ENCODE measurements at regions of chr10 and their contacts with region 1.

Region 1: DNA sequence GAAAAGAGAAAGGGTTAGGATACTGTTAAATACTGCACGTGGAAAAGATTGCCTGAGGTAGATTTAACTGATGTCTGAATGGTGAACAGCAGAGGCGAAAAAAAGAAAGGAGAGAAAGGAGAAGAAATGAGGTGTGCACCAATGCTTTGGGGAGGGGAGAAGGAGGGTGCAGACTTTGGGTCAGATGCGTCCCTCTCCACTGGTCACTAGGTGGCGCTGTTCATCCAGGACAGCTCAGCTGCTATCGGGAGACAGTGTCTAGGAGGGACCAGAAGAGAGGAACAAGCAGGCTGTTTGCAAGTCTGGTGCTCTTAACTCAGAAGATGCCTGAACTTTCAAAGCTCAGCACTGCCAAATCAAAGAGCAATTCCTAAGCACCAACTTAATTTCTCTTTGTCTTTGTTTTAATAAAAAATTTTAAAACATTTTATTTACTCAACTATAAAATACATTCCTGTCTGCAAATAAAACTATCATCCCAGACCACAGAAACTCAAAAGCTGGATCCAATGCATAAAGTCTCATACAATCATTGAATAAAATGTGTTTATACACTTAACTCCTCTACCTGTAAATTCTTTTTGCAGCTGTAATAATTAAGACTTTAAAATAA is 83.9 kb upstream of the PDLIM1 start:
- DNase-seq: peak; percentile 53 to 88
- H3K4me3 ChIP-seq: no peak overlapping the region
- H3K27ac ChIP-seq: peak overlapping the region; percentile 77 to 91
- H3K4me1 ChIP-seq: peaks cover 0 to 69% (median 41%) of the 10 kb centered on the region in 4 donors
- H3K27me3 ChIP-seq: no peaks in the 10 kb centered on the region
- CTCF ChIP-seq: peak; percentile 88 to 94

Region 2: GRCh38 chr10:93741358-93741757 is 1633.3 kb before region 1 on chr10:
- intact Hi-C with region 1: no loop called
- DNase-seq: no peak
- H3K4me3 ChIP-seq: no peak overlapping the region
- H3K27ac ChIP-seq: no peak overlapping the region
- H3K4me1 ChIP-seq: peaks cover 0 to 3% (median 0%) of the 10 kb centered on the region in 4 donors
- H3K27me3 ChIP-seq: no peaks in the 10 kb centered on the region
- CTCF ChIP-seq: no peak

Region 3: GRCh38 chr10:95273393-95274312 is 101.0 kb before region 1 on chr10:
- intact Hi-C with region 1: no loop called
- DNase-seq: peak; percentile 79 to 83
- H3K4me3 ChIP-seq: peak overlapping the region; percentile 22 to 28
- H3K27ac ChIP-seq: peak overlapping the region; percentile 75 to 81
- H3K4me1 ChIP-seq: peaks cover 0 to 72% (median 57%) of the 10 kb centered on the region in 4 donors
- H3K27me3 ChIP-seq: no peaks in the 10 kb centered on the region
- CTCF ChIP-seq: no peak

Region 4: DNA sequence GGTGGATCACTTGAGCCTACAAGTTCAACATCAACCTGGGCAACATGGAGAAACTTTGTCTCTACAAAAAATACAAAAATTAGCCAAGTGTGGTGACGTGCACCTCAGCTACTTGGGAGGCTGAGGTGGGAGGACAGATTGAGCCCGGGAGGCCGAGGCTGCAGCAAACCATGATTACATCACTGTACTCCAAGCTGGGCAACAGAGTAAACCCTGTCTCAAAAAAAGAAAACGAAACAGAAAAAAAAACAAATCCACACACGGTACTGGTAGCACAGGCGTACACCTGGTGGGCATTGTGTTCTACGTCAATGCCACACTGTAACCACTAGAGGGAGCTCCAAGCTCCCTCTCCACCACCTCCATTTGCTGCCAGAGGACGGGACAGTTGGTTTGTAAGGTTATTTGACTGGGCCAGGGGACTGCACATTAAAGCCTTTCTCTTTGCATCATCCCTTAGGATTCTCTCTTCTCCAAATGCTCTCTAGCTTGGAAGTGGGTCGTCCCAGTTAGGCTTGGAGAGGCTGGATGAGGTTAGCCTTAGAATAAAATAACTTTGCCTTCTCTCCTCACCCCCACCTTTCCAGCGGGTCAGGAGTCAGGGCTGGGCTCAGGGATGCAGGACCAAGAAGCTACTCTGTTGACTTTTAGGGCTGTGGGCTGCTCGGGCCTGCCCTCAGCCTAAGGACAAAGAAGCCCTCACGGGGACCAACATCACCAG is 55.7 kb after region 1 on chr10:
- intact Hi-C with region 1: loop called (anchors 5 kb)
- DNase-seq: no peak
- H3K4me3 ChIP-seq: no peak overlapping the region
- H3K27ac ChIP-seq: peak overlapping the region; percentile 80 to 91
- H3K4me1 ChIP-seq: peaks cover 0 to 97% (median 78%) of the 10 kb centered on the region in 4 donors
- H3K27me3 ChIP-seq: no peaks in the 10 kb centered on the region
- CTCF ChIP-seq: peak; percentile 90 to 94

Region 5: GRCh38 chr10:95561182-95562075 is 186.7 kb after region 1 on chr10 and contains the start of gene SORBS1:
- intact Hi-C with region 1: loop called (anchors 5 kb)
- DNase-seq: peak; percentile 97 to 98
- H3K4me3 ChIP-seq: peak within 1 kb of the TSS; percentile 68 to 85
- H3K27ac ChIP-seq: peak within 1 kb of the TSS; percentile 80 to 89
- H3K4me1 ChIP-seq: peaks cover 0 to 21% (median 9%) of the 10 kb centered on the region in 4 donors
- H3K27me3 ChIP-seq: no peaks in the 10 kb centered on the region
- CTCF ChIP-seq: no peak